Uterus (tissue), 4 donors: ENCODE measurements at regions of chr12 and their contacts with region 1.

Region 1: GRCh38 chr12:57069523-57069922 is 9.1 kb downstream of the NEMP1 start:
- DNase-seq: peak; percentile 51 to 83
- H3K4me3 ChIP-seq: no peak overlapping the region
- H3K27ac ChIP-seq: peak overlapping the region; percentile 75 to 85
- H3K4me1 ChIP-seq: peaks cover 0 to 4% of the 10 kb centered on the region in 2 donors
- H3K27me3 ChIP-seq: no peaks in the 10 kb centered on the region
- CTCF ChIP-seq: peak; percentile 84 to 99 (median 92)
- POLR2A ChIP-seq: peak in 1 of 2 donors; percentile 24

Region 2: DNA sequence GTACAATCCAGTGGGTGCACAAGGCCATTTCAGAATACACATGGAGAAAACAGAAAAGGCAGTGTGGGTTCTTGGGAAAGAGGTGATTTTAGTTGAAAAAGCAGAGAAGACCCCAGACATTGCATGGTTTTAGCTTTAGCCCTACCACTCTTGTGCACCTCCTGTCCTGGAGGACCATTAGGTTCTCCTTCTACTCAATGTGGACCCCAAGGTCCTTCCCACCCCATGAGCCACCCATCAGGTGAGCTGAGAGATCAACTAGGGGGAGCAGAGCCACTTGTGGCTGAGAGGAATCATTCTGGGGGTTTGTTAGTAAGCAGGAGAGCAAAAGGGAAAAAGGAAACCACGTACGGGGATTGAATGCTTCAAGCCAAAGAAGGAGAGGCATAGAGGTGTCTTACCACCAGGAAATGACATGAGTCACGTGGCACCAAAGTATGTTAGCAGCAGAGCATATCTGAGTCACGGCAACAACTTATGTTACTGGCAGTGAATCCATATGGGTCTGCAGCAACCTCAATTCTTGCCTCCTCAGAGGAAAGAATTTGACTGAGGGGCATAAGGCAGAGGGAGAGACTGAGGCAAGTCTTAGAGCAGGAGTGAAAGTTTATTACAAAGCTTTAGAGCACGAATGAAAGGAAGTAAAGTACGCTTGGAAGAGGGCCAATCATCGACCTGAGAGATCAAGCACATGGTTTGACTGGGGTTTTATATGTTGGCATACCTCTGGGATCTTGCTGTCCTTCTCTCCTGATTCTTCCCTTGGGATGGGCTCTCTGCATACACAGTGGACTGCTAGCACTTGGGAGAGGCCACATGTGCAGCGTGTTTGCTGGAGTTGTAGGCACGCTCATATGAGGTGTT is 232.5 kb before region 1 on chr12:
- intact Hi-C with region 1: no loop called
- DNase-seq: no peak
- H3K4me3 ChIP-seq: no peak overlapping the region
- H3K27ac ChIP-seq: no peak overlapping the region
- H3K4me1 ChIP-seq: no peaks in the 10 kb centered on the region
- H3K27me3 ChIP-seq: no peaks in the 10 kb centered on the region
- CTCF ChIP-seq: no peak
- POLR2A ChIP-seq: no peak

Region 3: GRCh38 chr12:56863789-56864188 is 205.7 kb before region 1 on chr12:
- intact Hi-C with region 1: no loop called
- DNase-seq: no peak
- H3K4me3 ChIP-seq: no peak overlapping the region
- H3K27ac ChIP-seq: no peak overlapping the region
- H3K4me1 ChIP-seq: no peaks in the 10 kb centered on the region
- H3K27me3 ChIP-seq: no peaks in the 10 kb centered on the region
- CTCF ChIP-seq: no peak
- POLR2A ChIP-seq: no peak

Region 4: DNA sequence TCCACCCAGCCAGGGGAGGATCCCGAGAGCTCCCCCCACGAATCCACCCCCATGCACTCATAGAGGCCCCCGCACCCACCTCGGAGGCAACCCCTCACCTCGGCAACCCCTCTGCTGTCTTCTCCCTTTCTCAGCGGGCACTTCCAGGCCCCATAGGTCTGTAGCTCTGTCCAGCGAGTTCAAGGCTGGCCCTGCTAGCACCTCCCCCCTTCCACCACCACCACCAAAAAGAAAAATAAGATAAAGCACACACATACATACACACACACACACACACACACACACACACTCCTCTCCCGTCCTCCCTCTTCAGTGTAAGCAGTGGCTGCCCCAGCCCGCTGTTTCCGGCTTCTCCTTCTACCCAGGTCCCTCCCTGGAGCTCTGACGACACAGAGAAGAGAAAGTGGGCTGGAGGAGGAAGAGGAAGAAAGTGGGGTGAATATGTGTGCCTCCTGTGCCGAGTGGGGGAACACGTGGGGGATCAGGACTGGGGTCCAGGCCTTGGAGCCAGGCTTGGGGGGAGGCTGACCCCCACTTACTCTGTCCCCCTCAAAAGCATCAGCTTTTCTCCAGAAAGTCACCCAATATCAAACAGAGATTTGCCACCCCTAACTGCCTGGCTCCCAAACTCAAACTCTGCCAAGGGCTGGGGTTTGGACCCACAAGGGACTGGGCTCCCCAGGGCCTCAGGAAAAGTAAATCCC is 41.7 kb after region 1 on chr12 and contains the start of gene STAT6:
- intact Hi-C with region 1: loop called (anchors 5 kb)
- DNase-seq: peak; percentile 74 to 88
- H3K4me3 ChIP-seq: peak within 1 kb of the TSS; percentile 64 to 85
- H3K27ac ChIP-seq: peak within 1 kb of the TSS; percentile 98 to 100
- H3K4me1 ChIP-seq: peaks cover 0 to 14% of the 10 kb centered on the region in 2 donors
- H3K27me3 ChIP-seq: no peaks in the 10 kb centered on the region
- CTCF ChIP-seq: peak in 1 of 4 experiments; percentile 26
- POLR2A ChIP-seq: peak in 1 of 2 donors; percentile 63
- total RNA-seq, gene STAT6: 62.5 to 242 (median 94.3) TPM

Region 5: GRCh38 chr12:57182921-57183790 is 113.6 kb after region 1 on chr12:
- intact Hi-C with region 1: loop called (anchors 5 kb)
- DNase-seq: peak; percentile 78 to 79
- H3K4me3 ChIP-seq: no peak overlapping the region
- H3K27ac ChIP-seq: no peak overlapping the region
- H3K4me1 ChIP-seq: no peaks in the 10 kb centered on the region
- H3K27me3 ChIP-seq: no peaks in the 10 kb centered on the region
- CTCF ChIP-seq: peak; percentile 79 to 94 (median 92)
- POLR2A ChIP-seq: peak in 1 of 2 donors; percentile 16